ENCODE measurements at regions of chr6 and their contacts with region 1.

Region 1: GRCh38 chr6:43325876-43326275 is 17.2 kb upstream of the CRIP3 start:
- DNase-seq: no peak
- H3K4me3 ChIP-seq: no peak overlapping the region
- H3K27ac ChIP-seq: no peak overlapping the region
- H3K4me1 ChIP-seq: no peaks in the 10 kb centered on the region
- H3K27me3 ChIP-seq: no peaks in the 10 kb centered on the region
- CTCF ChIP-seq: no peak
- EP300 ChIP-seq: no peak
- POLR2A ChIP-seq: no peak

Region 2: GRCh38 chr6:43378631-43379030 is 52.8 kb after region 1 on chr6:
- intact Hi-C with region 1: loop called in 1 of 4 experiments (anchors 2 kb)
- DNase-seq: no peak
- H3K4me3 ChIP-seq: no peak overlapping the region
- H3K27ac ChIP-seq: no peak overlapping the region
- H3K4me1 ChIP-seq: no peaks in the 10 kb centered on the region
- H3K27me3 ChIP-seq: no peaks in the 10 kb centered on the region
- CTCF ChIP-seq: no peak
- EP300 ChIP-seq: no peak
- POLR2A ChIP-seq: no peak

Measured in ovary (tissue), 10 donors.